ENCODE measurements at regions of chr11 and their contacts with region 1.

Region 1: DNA sequence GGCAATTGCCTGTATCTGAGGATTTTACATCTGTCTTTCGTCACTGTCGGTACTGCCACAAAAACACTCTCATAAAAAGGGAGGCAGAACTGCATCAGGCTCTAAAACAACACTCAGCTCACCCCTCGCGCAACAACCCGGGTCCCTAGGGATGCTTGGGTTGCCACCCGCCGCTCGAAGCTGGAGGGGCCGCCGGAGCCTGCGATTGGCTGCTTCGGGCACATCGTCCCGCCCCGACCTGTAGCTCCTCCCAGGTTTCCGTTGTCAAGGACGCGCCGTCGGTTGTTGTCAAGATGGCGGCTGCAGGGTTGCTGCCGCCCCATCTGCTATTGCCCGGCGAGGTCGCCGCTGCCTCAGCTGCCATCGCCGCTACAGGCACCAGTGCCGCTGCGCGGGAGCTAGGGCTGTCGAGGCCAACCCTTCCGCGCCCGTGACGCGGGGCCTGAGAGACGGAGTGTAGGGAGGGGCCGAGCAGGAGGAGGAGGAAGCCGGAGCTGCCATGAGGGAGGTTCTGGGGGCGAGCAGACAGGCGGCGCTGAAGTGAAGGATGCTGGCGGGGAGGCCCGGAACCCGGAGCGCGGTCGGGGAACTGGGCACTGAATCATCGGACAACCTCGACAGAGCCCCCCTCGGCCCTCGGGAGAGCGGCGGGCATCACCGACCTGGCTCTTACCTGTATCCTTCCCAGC is at the start of gene CEP126:
- DNase-seq: peak; percentile 86
- H3K4me3 Mint-ChIP-seq: peak within 1 kb of the TSS; percentile 92
- H3K27ac Mint-ChIP-seq: peak within 1 kb of the TSS; percentile 74
- H3K4me1 Mint-ChIP-seq: peaks cover 22% of the 10 kb centered on the region
- H3K27me3 Mint-ChIP-seq: peaks cover 2% of the 10 kb centered on the region
- total RNA-seq, gene CEP126: 0.41 and 1.2 TPM in 2 replicates

Region 2: DNA sequence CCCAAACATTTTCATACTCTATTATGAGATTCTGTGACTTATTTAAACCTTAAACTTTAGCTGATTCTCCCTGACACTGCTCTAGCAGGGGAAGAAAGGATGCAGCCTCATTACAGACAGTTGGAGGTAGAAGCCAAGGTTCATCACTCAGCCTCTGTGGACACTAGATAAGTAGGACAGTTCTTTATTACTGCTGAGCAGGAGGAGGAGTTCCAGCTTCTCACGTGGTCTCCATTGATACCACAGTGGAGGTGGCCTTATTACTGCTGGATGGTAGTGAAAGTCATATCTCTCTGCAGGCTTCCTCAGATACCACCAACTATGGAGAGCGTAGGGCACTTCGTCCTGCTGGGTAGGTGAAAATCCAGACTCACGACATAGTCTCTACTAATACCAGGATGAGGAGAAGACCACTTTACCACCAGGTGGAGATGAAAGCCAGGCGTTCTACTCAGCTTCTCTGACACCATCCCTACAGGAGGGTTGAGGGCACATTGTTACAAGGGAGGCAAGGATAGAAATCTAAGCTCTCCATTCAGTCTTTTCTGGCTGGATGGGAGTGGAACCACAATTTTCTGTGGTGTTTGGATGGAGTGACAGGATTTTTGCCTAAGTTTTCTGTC is 14.5 kb after region 1 on chr11:
- intact Hi-C with region 1: loop called (anchors 2 kb)
- DNase-seq: no peak
- H3K4me3 Mint-ChIP-seq: no peak overlapping the region
- H3K27ac Mint-ChIP-seq: no peak overlapping the region
- H3K4me1 Mint-ChIP-seq: no peaks in the 10 kb centered on the region
- H3K27me3 Mint-ChIP-seq: no peaks in the 10 kb centered on the region

Region 3: DNA sequence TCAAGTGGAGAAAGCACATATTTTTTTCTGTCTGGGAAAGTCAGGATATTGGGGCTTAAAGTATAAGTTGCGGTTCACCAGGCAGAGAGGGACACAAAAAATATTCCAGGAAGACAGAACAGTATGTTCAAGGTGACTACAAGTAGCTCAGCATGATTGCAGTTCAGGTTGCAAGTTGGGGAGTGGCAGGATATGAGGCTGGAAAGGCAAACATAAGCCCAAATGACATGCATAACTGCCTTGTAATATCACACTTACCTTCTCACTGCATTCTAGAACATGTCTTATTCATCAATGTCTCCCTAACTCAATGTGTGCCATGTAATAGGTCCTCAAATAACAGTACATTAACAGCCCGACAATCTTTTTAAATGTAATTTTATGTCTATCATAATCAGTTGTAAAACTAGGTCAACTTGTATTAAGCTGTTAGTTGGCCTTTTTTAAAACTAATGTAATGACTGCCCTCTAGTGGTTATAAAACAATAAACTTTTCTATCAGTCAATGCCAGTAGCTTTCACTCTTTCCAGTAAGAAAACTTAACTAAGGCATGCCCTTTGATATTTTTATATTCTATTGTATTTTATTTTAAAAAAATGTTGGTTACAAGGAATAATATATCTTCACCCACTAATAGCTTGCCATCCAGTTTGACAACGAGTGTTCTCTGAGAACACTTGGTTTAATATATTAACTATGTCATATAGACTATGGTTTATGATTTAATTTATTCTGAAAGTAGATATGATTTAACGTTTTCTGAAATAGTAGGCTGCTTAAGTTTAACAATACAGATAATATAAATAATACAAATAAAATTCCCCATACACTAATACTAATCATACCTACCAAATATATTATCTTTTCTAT is 92.9 kb after region 1 on chr11:
- intact Hi-C with region 1: loop called (anchors 2 kb)
- DNase-seq: no peak
- H3K4me3 Mint-ChIP-seq: no peak overlapping the region
- H3K27ac Mint-ChIP-seq: no peak overlapping the region
- H3K4me1 Mint-ChIP-seq: peaks cover 7% of the 10 kb centered on the region
- H3K27me3 Mint-ChIP-seq: peaks cover 7% of the 10 kb centered on the region

Region 4: DNA sequence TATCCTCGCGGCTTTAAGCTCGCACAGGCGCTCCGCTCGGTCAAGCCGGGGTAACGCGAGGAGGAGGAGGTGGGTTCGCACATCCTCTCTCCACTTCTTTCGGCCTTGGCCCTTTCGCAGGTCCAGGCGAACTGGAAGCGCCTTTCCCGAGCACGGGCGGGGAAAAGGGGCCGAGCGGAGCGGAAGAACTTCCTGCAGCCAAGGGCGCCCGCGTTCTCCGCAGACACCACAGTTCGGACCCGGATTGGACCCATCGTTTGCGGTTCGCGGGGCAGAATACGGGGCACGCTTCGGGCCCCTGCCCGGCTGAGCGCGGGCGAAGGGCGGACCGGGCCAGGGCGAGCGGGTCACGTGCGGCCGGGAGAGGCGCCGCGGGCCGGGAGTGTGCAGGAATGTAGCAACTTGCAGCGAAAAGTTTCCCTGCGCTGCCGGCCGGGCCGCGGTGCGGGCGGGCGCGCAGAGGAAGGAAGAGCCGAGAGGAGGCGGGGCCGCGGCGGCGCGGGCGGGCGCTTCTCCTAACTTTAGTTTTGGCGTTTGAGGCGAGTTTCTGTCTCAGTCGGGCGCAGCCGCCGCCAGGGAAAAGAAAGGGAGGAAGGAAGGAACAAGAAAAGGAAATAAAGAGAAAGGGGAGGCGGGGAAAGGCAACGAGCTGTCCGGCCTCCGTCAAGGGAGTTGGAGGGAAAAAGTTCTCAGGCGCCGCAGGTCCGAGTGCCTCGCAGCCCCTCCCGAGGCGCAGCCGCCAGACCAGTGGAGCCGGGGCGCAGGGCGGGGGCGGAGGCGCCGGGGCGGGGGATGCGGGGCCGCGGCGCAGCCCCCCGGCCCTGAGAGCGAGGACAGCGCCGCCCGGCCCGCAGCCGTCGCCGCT is 195.2 kb after region 1 on chr11 and contains the start of gene YAP1:
- intact Hi-C with region 1: loop called (anchors 5 kb)
- DNase-seq: peak; percentile 55
- H3K4me3 Mint-ChIP-seq: peak within 1 kb of the TSS; percentile 93
- H3K27ac Mint-ChIP-seq: peak within 1 kb of the TSS; percentile 75
- H3K4me1 Mint-ChIP-seq: peaks cover 7% of the 10 kb centered on the region
- H3K27me3 Mint-ChIP-seq: peaks cover 65% of the 10 kb centered on the region
- total RNA-seq, gene YAP1: 0.10 TPM in 2 replicates

Region 5: GRCh38 chr11:102268329-102269193 is 353.7 kb after region 1 on chr11:
- intact Hi-C with region 1: loop called (anchors 10 kb)
- DNase-seq: peak; percentile 53
- H3K4me3 Mint-ChIP-seq: peak overlapping the region; percentile 67
- H3K27ac Mint-ChIP-seq: no peak overlapping the region
- H3K4me1 Mint-ChIP-seq: peaks cover 28% of the 10 kb centered on the region
- H3K27me3 Mint-ChIP-seq: peaks cover 41% of the 10 kb centered on the region

Region 6: DNA sequence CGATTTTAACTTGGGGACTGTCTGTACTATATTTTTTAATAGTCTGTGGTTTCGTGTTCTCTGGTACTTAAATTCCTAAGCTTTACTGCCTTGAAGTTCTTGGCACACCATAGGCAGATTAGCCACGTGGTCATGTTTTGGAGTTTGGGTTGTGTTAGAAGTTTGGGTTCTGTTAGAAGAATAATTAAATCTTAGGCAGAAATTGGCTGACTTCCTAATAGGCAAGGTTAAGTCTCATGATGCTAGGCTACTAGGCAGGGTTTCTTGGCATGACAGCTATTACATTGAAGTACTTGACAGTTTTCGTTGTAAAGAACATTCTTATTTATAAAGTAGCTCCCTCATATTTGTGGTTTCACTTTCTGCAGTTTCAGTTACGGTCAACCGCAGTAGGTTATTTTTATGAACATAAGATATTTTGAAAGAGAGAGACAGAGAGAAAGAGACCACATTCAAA is 645.7 kb after region 1 on chr11:
- intact Hi-C with region 1: loop called (anchors 10 kb)
- DNase-seq: no peak
- H3K4me3 Mint-ChIP-seq: peak overlapping the region; percentile 63
- H3K27ac Mint-ChIP-seq: no peak overlapping the region
- H3K4me1 Mint-ChIP-seq: peaks cover 50% of the 10 kb centered on the region
- H3K27me3 Mint-ChIP-seq: peaks cover 2% of the 10 kb centered on the region

Region 7: DNA sequence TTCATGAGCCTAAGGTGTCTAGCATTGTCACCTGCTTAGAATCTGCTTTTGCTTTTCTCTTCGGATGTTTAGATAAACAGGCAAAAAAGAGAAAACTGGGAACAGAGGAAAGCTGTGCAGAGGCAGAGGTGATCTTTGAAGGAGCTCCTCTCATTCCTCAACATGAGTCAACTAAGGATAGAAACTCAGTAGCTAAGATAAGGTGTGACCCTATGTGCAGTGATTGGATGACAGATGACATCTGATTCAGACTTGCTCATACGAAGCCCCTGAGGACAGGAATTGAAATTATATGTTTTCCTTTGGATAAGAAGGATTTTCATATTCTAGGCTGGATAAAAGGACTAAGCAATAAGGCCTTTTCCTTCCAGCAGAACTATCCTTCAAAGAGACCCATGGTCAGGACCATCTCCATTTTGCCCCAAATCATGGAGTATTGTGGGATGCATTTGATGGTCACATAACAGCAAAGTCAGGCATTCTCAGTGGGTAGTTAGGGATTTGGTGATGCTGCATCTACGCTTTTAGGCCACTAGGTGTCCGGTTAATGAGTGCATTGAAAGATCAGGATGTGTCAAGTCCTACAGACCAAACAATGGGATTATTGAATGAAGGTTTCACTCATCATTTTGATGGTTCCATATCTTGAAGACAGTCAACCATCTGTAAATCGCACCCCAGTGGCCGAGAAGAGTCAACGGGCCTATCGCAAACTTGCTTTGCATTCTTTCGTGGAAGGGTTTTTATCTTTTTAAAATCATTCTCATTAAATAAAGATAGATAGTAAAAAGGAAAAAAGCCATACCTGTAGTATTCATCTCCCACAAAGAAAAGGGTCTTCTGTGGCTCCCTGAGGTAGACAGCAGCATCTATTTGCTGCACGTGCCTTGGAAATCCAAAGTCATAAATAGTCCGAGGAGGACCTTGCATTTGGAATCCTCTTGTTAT is 678.0 kb after region 1 on chr11:
- intact Hi-C with region 1: no loop called
- DNase-seq: no peak
- H3K4me3 Mint-ChIP-seq: no peak overlapping the region
- H3K27ac Mint-ChIP-seq: no peak overlapping the region
- H3K4me1 Mint-ChIP-seq: peaks cover 46% of the 10 kb centered on the region
- H3K27me3 Mint-ChIP-seq: no peaks in the 10 kb centered on the region

Region 8: DNA sequence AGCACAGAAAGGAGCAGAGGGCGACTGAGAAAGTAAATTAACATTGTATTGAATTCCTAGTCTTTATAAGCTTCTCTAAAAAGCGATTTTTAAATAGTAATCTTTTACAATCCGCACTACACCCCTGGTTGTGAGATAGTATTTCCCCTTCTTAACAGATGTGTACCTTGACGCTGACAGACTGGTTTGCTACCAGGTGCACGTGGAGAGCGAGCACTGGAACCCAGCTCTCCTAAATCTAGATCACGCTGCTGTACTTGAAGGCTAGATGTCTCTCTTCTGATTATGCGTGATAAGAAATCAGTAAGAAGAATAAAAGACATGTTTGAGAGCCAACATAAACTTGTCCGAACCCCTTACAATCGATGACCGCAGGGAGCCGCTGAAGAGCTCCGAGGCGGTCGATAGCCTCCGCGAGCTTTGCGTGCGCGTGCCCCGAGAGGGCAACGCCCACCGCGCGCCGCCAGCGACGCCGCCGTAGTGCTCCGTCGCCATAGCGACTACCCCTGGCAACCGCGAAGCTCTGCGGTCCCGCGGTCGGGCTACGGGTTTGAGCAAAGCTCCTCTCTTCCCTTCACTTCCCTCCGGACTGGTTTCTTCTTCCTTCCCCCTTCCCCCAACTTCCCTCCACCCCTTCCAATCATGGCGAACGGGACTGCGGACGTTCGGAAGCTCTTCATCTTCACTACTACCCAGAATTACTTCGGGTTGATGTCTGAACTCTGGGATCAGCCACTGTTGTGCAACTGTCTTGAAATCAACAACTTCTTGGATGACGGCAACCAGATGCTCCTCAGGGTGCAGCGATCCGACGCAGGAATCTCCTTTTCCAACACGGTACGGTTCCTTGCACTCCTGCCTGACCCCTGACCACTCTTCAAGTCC is 1194.3 kb after region 1 on chr11 and contains the start of gene DYNC2H1:
- intact Hi-C with region 1: loop called (anchors 10 kb)
- DNase-seq: peak; percentile 87
- H3K4me3 Mint-ChIP-seq: peak within 1 kb of the TSS; percentile 92
- H3K27ac Mint-ChIP-seq: peak within 1 kb of the TSS; percentile 90
- H3K4me1 Mint-ChIP-seq: peaks cover 8% of the 10 kb centered on the region
- H3K27me3 Mint-ChIP-seq: peaks cover 35% of the 10 kb centered on the region
- total RNA-seq, gene DYNC2H1: 0.91 and 1.1 TPM in 2 replicates

Measured in activated T-helper 1 cell treated with anti-CD3 and anti-CD28 coated beads, Interleukin-12 subunit alpha, Interleukin-12 subunit beta, Interleukin-2, Interleukin-4 antibody, amounts not matched to agents 30 ng/mL and 10 ng/mL and 1 ng/mL, durations not matched to agents 14 hours and 24 hours and 36 hours (primary cell).